Panc1 (cell line): ENCODE measurements at regions of chr6 and their contacts with region 1.

Region 1: DNA sequence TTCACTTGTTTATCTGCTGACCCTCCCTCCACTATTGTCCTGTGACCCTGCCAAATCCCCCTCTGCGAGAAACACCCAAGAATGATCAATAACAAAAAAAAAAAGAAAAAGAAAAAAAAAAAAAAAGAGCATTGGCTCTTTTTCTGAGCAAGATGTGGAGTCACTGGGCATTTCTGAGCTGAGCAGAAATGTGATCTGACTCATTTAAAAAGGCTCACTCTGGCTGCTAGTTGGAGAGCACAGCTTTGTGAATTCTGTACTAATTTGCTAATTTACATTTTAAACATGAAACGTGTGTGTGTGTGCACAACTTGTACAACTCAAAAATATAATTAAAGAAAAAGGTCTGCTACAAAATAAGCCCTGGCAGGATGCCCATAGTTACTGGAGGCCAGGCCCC is 20.2 kb downstream of the SCML4 start:
- DNase-seq: no peak
- ATAC-seq: no peak
- H3K4me3 ChIP-seq: no peak overlapping the region
- H3K27ac ChIP-seq: no peak overlapping the region
- H3K4me1 ChIP-seq: no peaks in the 10 kb centered on the region
- H3K27me3 ChIP-seq: peaks cover 28% of the 10 kb centered on the region
- CTCF ChIP-seq: no peak

Region 2: GRCh38 chr6:107716688-107717089 is 87.3 kb before region 1 on chr6:
- CTCF ChIA-PET with region 1: no interaction called
- POLR2A ChIA-PET with region 1: no interaction called
- in situ Hi-C with region 1: no loop called
- intact Hi-C with region 1: no loop called
- DNase-seq: no peak
- ATAC-seq: peak; percentile 44; the same call in 1 of the 2 replicates
- H3K4me3 ChIP-seq: peak overlapping the region in 1 of 2 experiments; percentile 36; a peak in 1 of 4 replicates
- H3K27ac ChIP-seq: no peak overlapping the region
- H3K4me1 ChIP-seq: no peaks in the 10 kb centered on the region; the same call in 1 of the 2 replicates
- H3K27me3 ChIP-seq: peaks cover 8% of the 10 kb centered on the region; the same call in 1 of the 2 replicates
- CTCF ChIP-seq: no peak

Region 3: DNA sequence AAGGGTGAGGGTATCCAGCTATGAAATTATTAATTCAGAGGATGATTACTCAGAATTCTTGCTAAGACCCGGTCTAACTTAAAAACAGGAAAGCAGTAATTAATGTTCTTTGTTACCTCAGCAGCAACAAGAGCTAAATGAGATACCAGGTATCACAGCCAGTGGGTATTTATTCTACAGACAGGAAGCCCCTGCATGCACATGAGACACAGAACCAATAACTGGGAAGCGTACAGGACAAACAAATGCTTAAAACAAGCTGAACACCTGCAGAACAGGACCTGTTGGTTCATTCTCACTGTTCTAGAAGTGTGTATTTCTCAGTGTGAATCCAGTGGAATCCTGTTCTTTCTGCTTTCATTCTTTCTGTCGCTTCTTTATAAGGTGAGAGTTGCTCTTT is 10.8 kb before region 1 on chr6:
- CTCF ChIA-PET with region 1: no interaction called
- POLR2A ChIA-PET with region 1: interaction called, 10 read pairs
- in situ Hi-C with region 1: no loop called
- intact Hi-C with region 1: no loop called
- DNase-seq: no peak
- ATAC-seq: no peak
- H3K4me3 ChIP-seq: no peak overlapping the region
- H3K27ac ChIP-seq: no peak overlapping the region
- H3K4me1 ChIP-seq: no peaks in the 10 kb centered on the region
- H3K27me3 ChIP-seq: peaks cover 32% of the 10 kb centered on the region
- CTCF ChIP-seq: no peak

Region 4: DNA sequence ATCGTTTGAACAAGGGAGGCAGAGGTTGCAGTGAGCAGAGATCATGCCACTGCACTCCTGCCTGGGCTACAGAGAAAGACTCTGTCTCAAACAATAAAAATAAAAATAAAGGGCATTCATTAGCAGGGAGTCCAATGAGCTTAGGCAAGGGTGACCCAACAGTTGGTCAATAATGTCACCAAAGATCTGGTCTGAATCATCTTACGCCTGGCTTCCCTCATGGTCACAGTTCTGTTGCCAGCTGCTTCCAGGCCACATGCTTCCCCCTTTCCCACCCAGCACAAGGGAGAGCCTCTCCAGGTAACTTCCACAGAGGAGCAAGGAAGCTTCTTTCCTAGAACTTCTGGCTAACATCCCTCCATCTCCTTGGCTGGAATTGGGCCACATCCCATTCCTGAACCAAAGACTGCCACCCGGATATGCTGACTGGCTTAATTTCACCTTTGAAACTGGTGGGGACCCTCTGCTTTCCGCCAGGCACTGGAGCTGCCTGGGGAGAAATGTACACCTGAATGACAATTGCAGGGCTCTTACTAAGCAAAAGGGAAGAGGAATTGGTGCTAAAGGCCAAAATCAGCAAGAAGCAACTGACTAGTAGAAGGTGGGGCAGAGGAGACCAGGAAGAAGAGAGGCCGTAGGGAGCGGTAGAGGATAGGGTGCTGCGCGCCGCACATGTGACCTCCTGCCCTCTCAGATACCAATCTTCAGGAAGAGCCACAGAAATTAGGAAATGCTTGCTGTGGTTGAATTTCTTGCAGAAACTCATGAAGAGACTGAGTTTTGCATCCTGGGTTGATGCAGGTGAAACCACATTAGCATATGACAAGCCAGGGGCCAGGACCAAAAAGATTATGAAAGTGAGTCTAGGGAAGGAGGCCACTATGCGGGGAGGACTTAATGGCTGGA is 28.4 kb after region 1 on chr6:
- CTCF ChIA-PET with region 1: no interaction called
- POLR2A ChIA-PET with region 1: no interaction called
- in situ Hi-C with region 1: no loop called
- intact Hi-C with region 1: no loop called
- DNase-seq: no peak
- ATAC-seq: no peak
- H3K4me3 ChIP-seq: no peak overlapping the region
- H3K27ac ChIP-seq: no peak overlapping the region
- H3K4me1 ChIP-seq: no peaks in the 10 kb centered on the region
- H3K27me3 ChIP-seq: no peaks in the 10 kb centered on the region; the same call in 1 of the 2 replicates
- CTCF ChIP-seq: no peak

Region 5: GRCh38 chr6:108622641-108623298 is 818.8 kb after region 1 on chr6:
- CTCF ChIA-PET with region 1: no interaction called
- POLR2A ChIA-PET with region 1: no interaction called
- in situ Hi-C with region 1: no loop called
- intact Hi-C with region 1: no loop called
- DNase-seq: no peak
- ATAC-seq: no peak; the same call in 1 of the 2 replicates
- H3K4me3 ChIP-seq: no peak overlapping the region
- H3K27ac ChIP-seq: no peak overlapping the region
- H3K4me1 ChIP-seq: peaks cover 9% of the 10 kb centered on the region
- H3K27me3 ChIP-seq: no peaks in the 10 kb centered on the region
- CTCF ChIP-seq: no peak